ENCODE measurements at regions of chr7 and their contacts with region 1.

Region 1: GRCh38 chr7:19747740-19748339 is 25.6 kb downstream of the TMEM196 start:
- DNase-seq: no peak
- H3K4me3 ChIP-seq: no peak overlapping the region
- H3K27ac ChIP-seq: no peak overlapping the region
- H3K4me1 ChIP-seq: no peaks in the 10 kb centered on the region
- H3K27me3 ChIP-seq: no peaks in the 10 kb centered on the region
- CTCF ChIP-seq: peak in 1 of 3 donors; percentile 34
- EP300 ChIP-seq: no peak
- POLR2A ChIP-seq: no peak

Region 2: GRCh38 chr7:20199015-20199737 is 451.3 kb after region 1 on chr7:
- intact Hi-C with region 1: loop called in 1 of 4 experiments (anchors 10 kb)
- DNase-seq: no peak
- H3K4me3 ChIP-seq: no peak overlapping the region
- H3K27ac ChIP-seq: no peak overlapping the region
- H3K4me1 ChIP-seq: no peaks in the 10 kb centered on the region
- H3K27me3 ChIP-seq: no peaks in the 10 kb centered on the region
- CTCF ChIP-seq: no peak
- EP300 ChIP-seq: no peak
- POLR2A ChIP-seq: no peak